Caco-2 (cell line): ENCODE measurements at regions of chr4 and their contacts with region 1.

Region 1: DNA sequence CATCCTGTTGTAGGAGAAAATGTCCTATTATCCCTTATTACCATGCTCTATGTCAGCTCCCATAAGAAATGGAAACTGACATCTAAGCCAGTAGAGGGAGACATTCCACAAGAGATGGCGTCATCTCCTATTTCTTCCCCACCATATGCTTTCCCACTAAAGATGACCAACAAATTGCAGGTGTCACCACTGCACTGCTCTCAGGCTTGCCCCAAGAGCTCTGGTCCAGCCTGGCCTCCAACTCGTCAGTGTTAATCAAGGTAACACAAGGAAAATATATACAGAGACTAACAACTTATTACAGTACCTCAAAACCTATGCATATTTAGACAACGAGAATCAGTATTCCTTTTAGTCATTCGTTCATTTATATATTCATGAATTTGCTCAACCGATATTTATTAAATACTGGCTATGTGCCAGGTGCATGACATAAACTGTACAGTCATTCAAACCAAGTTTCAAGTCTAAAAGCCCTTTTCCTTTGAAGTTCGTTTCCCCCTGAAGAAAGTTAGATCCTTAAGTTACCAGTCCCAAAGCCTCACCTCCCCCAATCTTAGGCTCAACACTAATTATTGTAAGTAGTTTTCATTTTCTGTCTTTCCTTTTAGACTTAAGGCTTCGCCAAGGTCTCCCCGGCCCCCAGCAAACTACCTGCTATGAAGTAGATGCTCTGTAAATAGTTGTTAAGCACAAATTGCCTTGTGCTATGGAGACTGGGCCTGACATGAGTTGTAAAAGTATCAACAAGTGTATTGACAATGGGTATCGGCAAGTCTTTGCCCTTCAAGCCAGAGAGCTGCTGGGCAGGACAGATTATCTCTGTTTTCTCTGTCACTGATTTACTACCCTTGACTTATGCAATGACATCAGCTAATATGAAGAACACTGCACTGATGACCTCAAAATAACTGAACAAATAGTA is 3.1 kb upstream of the FGB start:
- DNase-seq: peak; percentile 69 to 73
- H3K4me3 ChIP-seq: no peak overlapping the region
- H3K4me3 Mint-ChIP-seq: no peak overlapping the region
- H3K27ac Mint-ChIP-seq: peak overlapping the region; percentile 77
- H3K4me1 ChIP-seq: peaks cover 37% of the 10 kb centered on the region
- H3K4me1 Mint-ChIP-seq: peaks cover 22% of the 10 kb centered on the region
- H3K27me3 ChIP-seq: no peaks in the 10 kb centered on the region; the same call in 1 of the 2 replicates
- H3K27me3 Mint-ChIP-seq: no peaks in the 10 kb centered on the region
- CTCF ChIP-seq: peak; percentile 68 to 79

Region 2: GRCh38 chr4:154577324-154577723 is 17.6 kb after region 1 on chr4:
- CTCF ChIA-PET with region 1: interaction called, 3 read pairs
- POLR2A ChIA-PET with region 1: no interaction called
- intact Hi-C with region 1: loop called (anchors 1 kb)
- DNase-seq: peak in 1 of 2 experiments; percentile 34
- H3K4me3 ChIP-seq: no peak overlapping the region
- H3K4me3 Mint-ChIP-seq: no peak overlapping the region
- H3K27ac Mint-ChIP-seq: no peak overlapping the region
- H3K4me1 ChIP-seq: 0 out of 2 replicates have a peak, but pooled peaks cover 5% of the 10 kb centered on the region
- H3K4me1 Mint-ChIP-seq: peaks cover 11% of the 10 kb centered on the region
- H3K27me3 ChIP-seq: no peaks in the 10 kb centered on the region
- H3K27me3 Mint-ChIP-seq: no peaks in the 10 kb centered on the region
- CTCF ChIP-seq: no peak

Region 3: DNA sequence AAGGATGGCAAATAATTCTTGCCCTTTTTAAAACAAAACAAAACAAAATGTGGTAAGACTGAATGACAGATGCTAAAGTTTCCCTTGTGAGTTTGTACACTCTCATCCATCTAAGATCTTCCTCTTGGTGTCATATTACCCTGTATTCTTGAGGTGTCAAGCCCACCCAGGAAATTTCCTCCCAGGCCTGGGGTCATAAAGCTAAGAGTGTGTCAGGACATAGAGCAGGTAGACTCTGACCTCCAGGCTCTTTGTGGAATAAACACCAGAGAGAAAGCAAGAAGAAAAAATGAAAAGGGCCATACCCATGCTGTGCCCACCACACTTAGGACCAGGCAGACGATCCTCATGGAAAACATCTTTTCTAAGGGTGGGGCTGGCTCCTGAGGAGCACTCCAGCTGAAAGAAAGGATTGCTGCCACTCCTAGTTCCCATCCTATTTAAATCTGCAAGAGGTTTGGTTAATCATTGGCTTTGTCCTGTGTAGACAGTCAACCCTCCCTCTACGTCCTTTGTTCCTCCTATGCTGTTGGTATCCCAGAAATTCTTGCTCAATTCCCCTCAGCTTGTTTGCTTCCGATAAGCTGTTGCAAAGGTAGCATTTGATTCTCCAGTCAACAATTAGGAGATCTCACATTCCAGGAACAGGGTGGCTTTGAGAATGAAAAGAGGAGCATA is 30.7 kb after region 1 on chr4 and contains the start of gene FGA:
- CTCF ChIA-PET with region 1: interaction called, 16 read pairs
- POLR2A ChIA-PET with region 1: no interaction called
- intact Hi-C with region 1: loop called (anchors 1 kb)
- DNase-seq: peak; percentile 80 to 84
- H3K4me3 ChIP-seq: peak within 1 kb of the TSS; percentile 21
- H3K4me3 Mint-ChIP-seq: peak within 1 kb of the TSS; percentile 64
- H3K27ac Mint-ChIP-seq: peak within 1 kb of the TSS; percentile 36
- H3K4me1 ChIP-seq: peaks cover 33% of the 10 kb centered on the region
- H3K4me1 Mint-ChIP-seq: peaks cover 33% of the 10 kb centered on the region
- H3K27me3 ChIP-seq: no peaks in the 10 kb centered on the region
- H3K27me3 Mint-ChIP-seq: no peaks in the 10 kb centered on the region
- CTCF ChIP-seq: no peak
- total RNA-seq, gene FGA: 61.7 and 71.8 TPM in 2 replicates

Region 4: DNA sequence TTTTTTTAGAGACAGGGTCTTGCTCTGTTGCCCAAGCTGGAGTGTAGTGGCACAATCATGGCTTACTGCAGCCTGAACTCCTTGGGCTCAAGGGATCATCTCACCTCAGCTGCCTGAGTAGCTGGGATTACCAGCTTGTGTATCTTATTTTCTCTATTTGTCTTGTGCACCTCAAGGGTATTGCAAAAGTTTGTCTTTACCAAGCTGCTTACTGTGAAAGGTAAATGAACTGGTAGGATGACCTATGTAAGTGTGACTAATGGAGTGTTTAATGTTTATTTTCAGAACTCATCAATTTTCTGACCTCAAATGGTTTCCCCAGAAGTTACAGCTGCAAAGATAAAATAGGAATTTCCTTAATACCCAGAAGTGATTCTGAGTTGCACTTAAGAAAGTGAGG is 36.1 kb after region 1 on chr4:
- CTCF ChIA-PET with region 1: interaction called, 16 read pairs
- POLR2A ChIA-PET with region 1: no interaction called
- intact Hi-C with region 1: loop called (anchors 1 kb)
- DNase-seq: peak; percentile 70 to 79
- H3K4me3 ChIP-seq: no peak overlapping the region
- H3K4me3 Mint-ChIP-seq: no peak overlapping the region
- H3K27ac Mint-ChIP-seq: no peak overlapping the region
- H3K4me1 ChIP-seq: peaks cover 45% of the 10 kb centered on the region
- H3K4me1 Mint-ChIP-seq: peaks cover 57% of the 10 kb centered on the region
- H3K27me3 ChIP-seq: no peaks in the 10 kb centered on the region
- H3K27me3 Mint-ChIP-seq: no peaks in the 10 kb centered on the region
- CTCF ChIP-seq: no peak

Region 5: DNA sequence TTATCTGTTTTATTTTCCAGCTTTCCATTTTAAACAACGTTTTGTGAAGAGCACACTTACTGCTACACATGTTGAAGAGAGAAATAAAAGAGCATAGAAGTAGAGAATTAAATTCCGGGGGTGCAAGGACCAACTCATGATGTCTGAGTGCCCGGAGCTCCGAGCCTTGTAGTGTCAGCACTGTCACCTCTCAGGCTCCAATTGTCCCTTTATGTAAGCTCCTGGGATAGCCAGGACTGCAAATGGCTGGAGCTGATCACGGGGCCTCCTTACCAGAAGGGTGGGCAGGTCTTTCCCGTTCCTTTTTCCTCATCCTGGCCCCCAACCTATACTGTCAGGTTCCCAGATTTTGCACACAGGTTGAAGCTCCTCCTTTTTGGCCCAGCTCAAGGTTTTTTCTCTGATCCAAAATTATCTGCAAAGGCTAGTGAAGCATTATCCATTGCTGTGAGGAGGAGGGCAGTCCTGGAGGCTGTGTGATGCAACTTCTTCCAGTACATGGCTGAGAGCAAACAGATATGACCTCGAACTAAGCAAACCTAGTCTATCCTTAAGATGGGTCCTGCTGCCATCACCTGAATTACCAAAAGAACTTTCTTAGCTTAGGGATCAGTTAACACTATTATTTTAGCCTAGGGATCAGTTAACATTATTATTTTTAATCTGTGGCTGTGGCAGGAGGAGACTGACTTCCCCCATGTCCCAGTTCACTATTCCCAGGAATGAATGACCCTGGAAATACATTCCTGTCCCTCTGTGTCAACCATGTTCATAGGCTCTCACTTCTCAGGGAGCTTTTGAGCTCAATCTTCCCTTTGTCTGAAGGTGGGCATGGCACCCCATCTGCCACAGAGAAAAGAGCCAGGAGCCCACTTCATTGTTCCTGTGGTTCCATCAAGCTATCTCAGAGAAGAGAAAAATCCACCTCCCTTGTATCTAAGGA is 53.0 kb after region 1 on chr4 and contains the start of gene FGG:
- CTCF ChIA-PET with region 1: interaction called, 251 read pairs
- POLR2A ChIA-PET with region 1: interaction called, 4 read pairs
- intact Hi-C with region 1: no loop called
- DNase-seq: peak; percentile 54 to 56
- H3K4me3 ChIP-seq: peak within 1 kb of the TSS; percentile 49
- H3K4me3 Mint-ChIP-seq: peak within 1 kb of the TSS; percentile 65
- H3K27ac Mint-ChIP-seq: peak within 1 kb of the TSS; percentile 66
- H3K4me1 ChIP-seq: peaks cover 38% of the 10 kb centered on the region
- H3K4me1 Mint-ChIP-seq: peaks cover 15% of the 10 kb centered on the region
- H3K27me3 ChIP-seq: no peaks in the 10 kb centered on the region
- H3K27me3 Mint-ChIP-seq: no peaks in the 10 kb centered on the region
- CTCF ChIP-seq: no peak
- total RNA-seq, gene FGG: 121 and 146 TPM in 2 replicates